PC-3 (cell line): ENCODE measurements at regions of chr1 and their contacts with region 1.

Region 1: DNA sequence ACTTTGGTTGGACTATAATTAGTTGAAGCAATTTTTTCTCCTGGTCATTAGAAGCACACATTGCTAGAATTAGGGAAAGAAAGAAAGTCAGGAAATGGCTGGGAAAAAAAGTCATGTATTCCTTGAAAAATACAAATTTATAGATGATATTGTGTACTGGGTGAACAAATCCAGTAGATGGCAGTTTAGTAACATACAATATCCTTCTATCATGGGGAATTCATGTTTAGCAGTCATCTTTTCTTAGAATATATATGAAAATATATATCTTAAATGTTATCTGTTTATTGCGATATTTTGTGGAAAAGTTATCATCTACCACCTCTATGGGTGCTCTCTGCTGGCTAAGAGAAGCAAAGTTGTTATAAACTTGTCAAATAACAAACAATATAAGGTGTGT is 13.1 kb upstream of the ZRANB2 start:
- DNase-seq: peak; percentile 53
- ATAC-seq: peak; percentile 25; the same call in 1 of the 2 replicates
- H3K4me3 ChIP-seq: no peak overlapping the region
- H3K27ac ChIP-seq: no peak overlapping the region
- H3K4me1 ChIP-seq: peaks cover 23% of the 10 kb centered on the region
- H3K27me3 ChIP-seq: no peaks in the 10 kb centered on the region
- CTCF ChIP-seq: peak; percentile 57

Region 2: DNA sequence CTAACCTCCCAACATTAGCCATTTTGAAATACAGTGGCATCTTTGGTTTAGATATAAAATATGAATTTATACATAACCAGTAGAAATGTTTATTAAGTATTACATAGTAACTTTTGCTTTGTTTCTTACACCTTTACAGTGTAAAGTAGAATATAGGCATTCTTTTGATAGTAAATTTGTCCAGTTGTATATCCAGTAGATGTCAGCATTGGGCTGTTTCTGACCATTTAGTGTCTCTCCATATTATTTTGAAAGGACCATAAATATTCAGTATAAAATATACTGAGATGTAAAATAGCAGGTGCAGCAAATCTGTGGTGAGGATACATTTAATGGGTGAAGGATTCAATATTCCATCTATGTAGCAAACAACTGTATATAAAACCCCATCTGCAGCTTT is 102.7 kb after region 1 on chr1:
- CTCF ChIA-PET with region 1: no interaction called
- POLR2A ChIA-PET with region 1: no interaction called
- intact Hi-C with region 1: loop called (anchors 1 kb)
- DNase-seq: peak; percentile 55
- ATAC-seq: peak; percentile 46
- H3K4me3 ChIP-seq: no peak overlapping the region
- H3K27ac ChIP-seq: no peak overlapping the region
- H3K4me1 ChIP-seq: no peaks in the 10 kb centered on the region
- H3K27me3 ChIP-seq: 0 out of 2 replicates have a peak, but pooled peaks cover 8% of the 10 kb centered on the region
- CTCF ChIP-seq: peak; percentile 70

Region 3: GRCh38 chr1:71324671-71325267 is 230.8 kb after region 1 on chr1:
- CTCF ChIA-PET with region 1: no interaction called
- POLR2A ChIA-PET with region 1: no interaction called
- intact Hi-C with region 1: no loop called
- DNase-seq: no peak
- ATAC-seq: no peak
- H3K4me3 ChIP-seq: no peak overlapping the region
- H3K27ac ChIP-seq: no peak overlapping the region
- H3K4me1 ChIP-seq: no peaks in the 10 kb centered on the region
- H3K27me3 ChIP-seq: no peaks in the 10 kb centered on the region
- CTCF ChIP-seq: no peak

Region 4: DNA sequence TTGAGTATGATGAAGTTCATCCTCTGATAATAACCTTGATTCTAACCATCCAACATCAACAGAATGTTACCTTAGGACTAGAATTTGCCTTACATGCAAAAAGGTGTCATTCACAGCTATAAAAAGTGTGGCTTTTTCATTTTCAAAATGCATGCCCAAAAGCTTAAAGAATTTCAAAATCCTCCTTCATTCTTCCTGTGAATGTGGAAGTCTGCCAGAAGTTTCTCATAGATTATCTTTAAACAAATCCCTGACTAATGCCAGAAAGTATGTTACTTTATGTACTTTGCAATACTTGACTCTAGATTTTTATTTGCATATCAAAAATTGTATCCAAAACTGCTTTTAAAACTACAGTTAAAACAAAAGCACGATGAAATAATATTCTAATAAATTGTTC is 257.5 kb after region 1 on chr1:
- CTCF ChIA-PET with region 1: no interaction called
- POLR2A ChIA-PET with region 1: no interaction called
- intact Hi-C with region 1: loop called (anchors 5 kb)
- DNase-seq: peak; percentile 90
- ATAC-seq: peak; percentile 84
- H3K4me3 ChIP-seq: no peak overlapping the region
- H3K27ac ChIP-seq: peak overlapping the region; percentile 64
- H3K4me1 ChIP-seq: peaks cover 19% of the 10 kb centered on the region
- H3K27me3 ChIP-seq: no peaks in the 10 kb centered on the region
- CTCF ChIP-seq: no peak

Region 5: GRCh38 chr1:71521655-71522264 is 427.8 kb after region 1 on chr1:
- CTCF ChIA-PET with region 1: no interaction called
- POLR2A ChIA-PET with region 1: no interaction called
- intact Hi-C with region 1: loop called (anchors 5 kb)
- DNase-seq: peak; percentile 70
- ATAC-seq: peak; percentile 66
- H3K4me3 ChIP-seq: no peak overlapping the region
- H3K27ac ChIP-seq: no peak overlapping the region
- H3K4me1 ChIP-seq: peaks cover 5% of the 10 kb centered on the region
- H3K27me3 ChIP-seq: no peaks in the 10 kb centered on the region
- CTCF ChIP-seq: peak; percentile 87

Region 6: GRCh38 chr1:71587961-71588360 is 494.0 kb after region 1 on chr1:
- CTCF ChIA-PET with region 1: no interaction called
- POLR2A ChIA-PET with region 1: no interaction called
- intact Hi-C with region 1: loop called (anchors 5 kb)
- DNase-seq: peak; percentile 47
- ATAC-seq: no peak; the same call in 1 of the 2 replicates
- H3K4me3 ChIP-seq: no peak overlapping the region
- H3K27ac ChIP-seq: no peak overlapping the region
- H3K4me1 ChIP-seq: peaks cover 14% of the 10 kb centered on the region
- H3K27me3 ChIP-seq: no peaks in the 10 kb centered on the region
- CTCF ChIP-seq: peak; percentile 60

Region 7: DNA sequence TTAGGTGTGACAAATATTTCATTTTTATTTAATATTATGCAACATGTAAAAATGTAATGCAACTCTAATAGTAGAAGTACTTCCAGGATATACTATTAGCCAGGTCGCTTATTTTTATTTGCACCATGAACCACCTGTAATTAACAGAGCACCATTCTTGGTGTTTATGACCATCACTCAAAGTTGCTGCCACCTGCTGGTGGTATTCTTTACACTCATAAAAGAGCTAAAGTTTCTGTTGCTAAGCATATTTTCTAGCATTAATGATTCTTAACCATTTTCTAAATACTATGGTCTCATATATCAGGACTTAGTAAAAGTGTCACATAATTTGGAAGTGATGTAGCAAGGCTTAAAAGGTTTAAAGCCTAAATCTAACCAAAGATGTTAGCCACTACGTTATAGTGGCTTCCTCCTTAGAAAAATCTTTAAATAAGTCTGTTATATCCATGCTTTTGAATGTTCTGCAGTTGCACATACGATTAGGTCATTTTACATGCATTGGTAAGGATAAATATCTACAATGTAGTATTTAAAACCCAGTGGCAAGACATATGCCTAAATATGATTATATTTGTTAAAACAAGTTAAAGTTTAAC is 943.9 kb after region 1 on chr1:
- CTCF ChIA-PET with region 1: no interaction called
- POLR2A ChIA-PET with region 1: no interaction called
- intact Hi-C with region 1: loop called (anchors 1 kb)
- DNase-seq: peak; percentile 67
- ATAC-seq: peak; percentile 29; the same call in 1 of the 2 replicates
- H3K4me3 ChIP-seq: no peak overlapping the region
- H3K27ac ChIP-seq: no peak overlapping the region
- H3K4me1 ChIP-seq: no peaks in the 10 kb centered on the region
- H3K27me3 ChIP-seq: no peaks in the 10 kb centered on the region
- CTCF ChIP-seq: peak; percentile 85

Region 8: DNA sequence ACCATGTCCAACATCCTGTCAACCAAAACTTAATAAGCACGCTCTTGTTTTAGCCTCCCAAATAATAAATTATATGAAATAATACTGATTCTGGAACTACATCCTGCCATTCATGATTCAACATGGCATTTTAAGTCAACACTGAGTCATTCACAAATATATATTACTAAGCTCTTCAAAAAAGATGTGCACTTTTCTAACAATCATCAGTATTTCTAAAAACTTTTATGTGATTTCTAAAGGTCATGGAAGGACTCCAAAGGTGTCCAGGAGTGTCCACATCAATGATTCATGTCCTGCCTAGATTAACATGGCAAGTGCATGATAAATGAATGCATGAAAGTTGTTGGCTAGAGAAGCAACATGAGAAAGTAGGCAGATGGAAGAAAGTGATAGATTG is 1136.8 kb after region 1 on chr1:
- CTCF ChIA-PET with region 1: no interaction called
- POLR2A ChIA-PET with region 1: no interaction called
- intact Hi-C with region 1: loop called (anchors 5 kb)
- DNase-seq: peak; percentile 96
- ATAC-seq: peak; percentile 73
- H3K4me3 ChIP-seq: peak overlapping the region; percentile 31; the same call in 1 of the 2 replicates
- H3K27ac ChIP-seq: peak overlapping the region; percentile 92
- H3K4me1 ChIP-seq: peaks cover 37% of the 10 kb centered on the region
- H3K27me3 ChIP-seq: no peaks in the 10 kb centered on the region
- CTCF ChIP-seq: no peak